A549 (cell line): ENCODE measurements at regions of chr3 and their contacts with region 1.

Region 1: DNA sequence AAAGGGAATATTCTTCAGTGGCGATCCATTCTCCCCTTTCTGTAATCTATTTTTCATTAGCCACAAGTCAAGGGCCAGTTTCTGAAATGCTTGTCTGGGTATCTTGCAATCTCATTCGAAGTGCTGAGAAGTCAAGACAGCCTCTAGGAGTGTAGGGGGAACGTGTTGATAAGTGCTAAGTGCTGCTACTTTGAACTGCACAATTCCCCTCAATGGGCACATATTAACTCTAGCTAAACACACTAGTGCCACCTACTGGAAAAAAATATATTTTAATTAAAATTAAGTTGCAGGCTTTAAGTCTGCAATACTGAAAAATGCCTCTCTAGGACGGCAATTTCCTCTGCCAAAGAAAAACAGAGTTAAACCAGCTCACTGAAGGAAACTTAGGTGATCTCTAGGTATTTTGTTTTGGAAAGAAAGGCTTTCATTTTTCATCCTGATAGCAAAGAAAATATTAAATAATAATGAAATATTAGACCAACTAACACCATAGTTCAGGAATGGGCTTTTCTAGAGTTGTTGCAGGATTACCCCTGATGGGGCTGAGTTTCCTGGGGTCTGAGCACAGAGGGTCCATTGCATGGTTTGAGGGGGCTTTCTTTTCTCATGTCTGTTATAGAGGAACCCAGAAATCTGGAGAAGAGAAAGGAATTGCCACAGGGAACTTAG is 181.9 kb upstream of the KBTBD8 start:
- DNase-seq: peak; percentile 2 to 47
- ATAC-seq: peak; percentile 68 to 76; a peak in 5 of 6 replicates
- H3K4me3 ChIP-seq: no peak overlapping the region
- H3K27ac ChIP-seq: no peak overlapping the region
- H3K4me1 ChIP-seq: no peaks in the 10 kb centered on the region
- CTCF ChIP-seq: peak; percentile 61
- EP300 ChIP-seq: no peak
- POLR2A ChIP-seq: no peak
- RAD21 ChIP-seq: peak; percentile 68 to 78

Region 2: GRCh38 chr3:66276705-66277274 is 539.4 kb before region 1 on chr3:
- CTCF ChIA-PET with region 1: interaction called, 30 read pairs
- POLR2A ChIA-PET with region 1: no interaction called
- DNase-seq: peak; percentile 4 to 62
- ATAC-seq: peak in 1 of 2 experiments; percentile 54; a peak in 2 of 6 replicates
- H3K4me3 ChIP-seq: no peak overlapping the region
- H3K27ac ChIP-seq: no peak overlapping the region
- H3K4me1 ChIP-seq: no peaks in the 10 kb centered on the region
- CTCF ChIP-seq: peak; percentile 70
- EP300 ChIP-seq: no peak
- POLR2A ChIP-seq: no peak
- RAD21 ChIP-seq: peak; percentile 66 to 73

Region 3: GRCh38 chr3:66803206-66803605 is 13.0 kb before region 1 on chr3:
- CTCF ChIA-PET with region 1: interaction called, 15 read pairs
- POLR2A ChIA-PET with region 1: no interaction called
- DNase-seq: no peak
- ATAC-seq: no peak
- H3K4me3 ChIP-seq: no peak overlapping the region
- H3K27ac ChIP-seq: no peak overlapping the region
- H3K4me1 ChIP-seq: no peaks in the 10 kb centered on the region
- CTCF ChIP-seq: no peak
- EP300 ChIP-seq: no peak
- POLR2A ChIP-seq: no peak
- RAD21 ChIP-seq: no peak

Region 4: DNA sequence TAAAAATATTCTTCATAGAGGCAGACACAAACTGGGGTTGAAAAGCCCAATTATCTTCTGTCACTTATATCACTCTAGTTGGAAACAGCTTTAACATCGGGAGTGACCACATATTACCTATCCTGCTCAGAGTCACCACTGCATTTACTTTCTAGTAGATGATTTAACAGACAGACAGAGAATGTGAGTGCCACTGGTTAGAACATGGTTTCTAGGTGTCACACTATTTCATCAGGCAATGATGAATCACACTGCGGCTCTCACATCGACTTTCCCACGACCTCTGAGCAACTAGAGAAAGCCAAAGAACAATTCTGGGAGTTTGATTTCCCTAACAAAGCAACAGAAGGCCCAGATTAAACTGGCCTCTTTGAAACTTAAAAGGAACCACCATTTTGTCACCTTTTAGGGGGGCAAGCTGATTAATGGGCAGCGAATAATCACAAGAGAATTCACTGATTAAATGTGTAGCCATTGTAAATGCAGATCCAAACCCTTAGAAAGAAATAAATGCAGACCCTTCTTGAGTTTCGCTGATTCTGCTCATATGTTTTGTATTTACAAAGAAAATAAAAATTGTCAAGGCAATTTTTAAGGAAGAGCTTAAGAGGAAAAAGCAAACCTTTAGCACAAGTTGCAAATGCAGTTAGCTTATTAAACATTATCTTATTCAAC is 69.2 kb after region 1 on chr3:
- CTCF ChIA-PET with region 1: no interaction called
- POLR2A ChIA-PET with region 1: no interaction called
- DNase-seq: peak in 1 of 2 experiments; percentile 43
- ATAC-seq: peak in 1 of 2 experiments; percentile 89; a peak in 3 of 6 replicates
- H3K4me3 ChIP-seq: no peak overlapping the region
- H3K27ac ChIP-seq: peak overlapping the region; percentile 52; a peak in 3 of 6 replicates
- H3K4me1 ChIP-seq: peaks cover 5% of the 10 kb centered on the region; the same call in 1 of the 3 replicates
- CTCF ChIP-seq: no peak
- EP300 ChIP-seq: no peak
- POLR2A ChIP-seq: no peak
- RAD21 ChIP-seq: no peak